Psoas muscle (tissue), 8 donors: ENCODE measurements at regions of chr1 and their contacts with region 1.

Region 1: DNA sequence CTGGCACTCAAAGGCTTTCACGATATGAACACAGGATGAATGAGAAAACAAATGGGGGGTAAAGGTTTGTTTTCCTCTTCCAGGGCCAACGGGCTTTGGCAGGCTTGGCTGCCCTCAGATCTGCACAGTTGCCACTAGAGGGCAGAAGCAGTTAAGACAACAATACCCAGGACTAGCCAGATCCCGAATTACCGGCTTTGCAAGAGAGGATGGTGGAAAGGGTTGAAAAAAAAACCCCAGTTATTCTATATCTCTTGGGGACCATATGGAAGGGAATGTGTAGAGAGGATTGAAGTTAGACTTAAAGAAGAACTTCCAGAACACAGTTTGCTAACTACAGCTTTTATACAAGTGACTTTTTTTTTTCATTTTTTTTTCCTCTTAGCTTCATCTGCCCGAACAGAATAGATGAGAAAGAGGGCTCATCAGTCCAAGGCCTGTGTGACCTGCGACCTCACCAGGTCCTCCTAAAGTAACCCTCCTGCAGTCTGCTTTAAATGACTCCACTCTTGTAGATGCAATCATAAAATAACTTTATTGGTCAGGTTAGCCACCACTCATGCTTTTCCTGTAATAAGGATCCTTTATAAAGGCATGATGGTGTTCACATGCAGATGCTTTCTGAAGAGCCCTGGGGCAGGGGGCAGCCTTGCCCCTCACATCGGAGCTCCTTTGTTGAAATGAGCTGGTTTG is 10.7 kb downstream of the FMOD start:
- DNase-seq: peak; percentile 57 to 74
- ATAC-seq: peak; percentile 69 to 79 (median 78)
- H3K4me3 ChIP-seq: no peak overlapping the region
- H3K27ac ChIP-seq: no peak overlapping the region
- H3K4me1 ChIP-seq: peaks cover 11% of the 10 kb centered on the region
- H3K27me3 ChIP-seq: no peaks in the 10 kb centered on the region
- CTCF ChIP-seq: peak; percentile 90

Region 2: GRCh38 chr1:203229471-203230135 is 110.7 kb before region 1 on chr1 and contains the start of gene CHIT1:
- intact Hi-C with region 1: no loop called
- DNase-seq: no peak
- ATAC-seq: no peak
- H3K4me3 ChIP-seq: no peak within 1 kb of the TSS
- H3K27ac ChIP-seq: no peak within 1 kb of the TSS
- H3K4me1 ChIP-seq: no peaks in the 10 kb centered on the region
- H3K27me3 ChIP-seq: no peaks in the 10 kb centered on the region
- CTCF ChIP-seq: no peak
- total RNA-seq, gene CHIT1: 0.08 to 0.27 TPM in 2 of 4 donors, not detected in the others

Region 3: DNA sequence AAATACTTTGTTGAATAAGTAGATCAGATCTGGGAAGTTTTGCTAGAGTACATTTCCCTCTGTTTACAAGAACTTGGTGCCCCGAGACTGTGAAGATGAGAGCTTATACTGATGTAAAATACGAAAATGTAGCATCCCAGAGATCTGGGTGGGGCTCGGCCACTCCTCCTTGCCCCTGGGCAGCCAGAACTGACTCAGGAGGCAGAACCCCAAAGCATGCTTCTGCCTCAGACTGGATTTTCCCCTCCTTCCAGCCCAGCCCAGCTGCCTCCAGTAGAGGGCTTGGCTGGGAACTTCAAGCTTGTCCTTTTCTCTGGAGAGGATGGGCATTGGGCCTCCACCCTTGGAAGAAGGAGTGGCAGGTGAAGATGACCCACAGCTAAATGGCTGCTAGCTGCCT is 59.3 kb before region 1 on chr1:
- intact Hi-C with region 1: no loop called
- DNase-seq: no peak
- ATAC-seq: peak in 2 of 4 donors; percentile 3 to 11
- H3K4me3 ChIP-seq: no peak overlapping the region
- H3K27ac ChIP-seq: peak overlapping the region; percentile 91
- H3K4me1 ChIP-seq: peaks cover 92% of the 10 kb centered on the region
- H3K27me3 ChIP-seq: no peaks in the 10 kb centered on the region
- CTCF ChIP-seq: no peak

Region 4: GRCh38 chr1:203440771-203441170 is 100.5 kb after region 1 on chr1:
- intact Hi-C with region 1: loop called in 1 of 2 experiments (anchors 1 kb)
- DNase-seq: peak; percentile 80 to 84
- ATAC-seq: peak; percentile 61 to 85 (median 76)
- H3K4me3 ChIP-seq: no peak overlapping the region
- H3K27ac ChIP-seq: no peak overlapping the region
- H3K4me1 ChIP-seq: no peaks in the 10 kb centered on the region
- H3K27me3 ChIP-seq: peaks cover 0 to 5% (median 0%) of the 10 kb centered on the region in 3 donors
- CTCF ChIP-seq: peak; percentile 46

Region 5: DNA sequence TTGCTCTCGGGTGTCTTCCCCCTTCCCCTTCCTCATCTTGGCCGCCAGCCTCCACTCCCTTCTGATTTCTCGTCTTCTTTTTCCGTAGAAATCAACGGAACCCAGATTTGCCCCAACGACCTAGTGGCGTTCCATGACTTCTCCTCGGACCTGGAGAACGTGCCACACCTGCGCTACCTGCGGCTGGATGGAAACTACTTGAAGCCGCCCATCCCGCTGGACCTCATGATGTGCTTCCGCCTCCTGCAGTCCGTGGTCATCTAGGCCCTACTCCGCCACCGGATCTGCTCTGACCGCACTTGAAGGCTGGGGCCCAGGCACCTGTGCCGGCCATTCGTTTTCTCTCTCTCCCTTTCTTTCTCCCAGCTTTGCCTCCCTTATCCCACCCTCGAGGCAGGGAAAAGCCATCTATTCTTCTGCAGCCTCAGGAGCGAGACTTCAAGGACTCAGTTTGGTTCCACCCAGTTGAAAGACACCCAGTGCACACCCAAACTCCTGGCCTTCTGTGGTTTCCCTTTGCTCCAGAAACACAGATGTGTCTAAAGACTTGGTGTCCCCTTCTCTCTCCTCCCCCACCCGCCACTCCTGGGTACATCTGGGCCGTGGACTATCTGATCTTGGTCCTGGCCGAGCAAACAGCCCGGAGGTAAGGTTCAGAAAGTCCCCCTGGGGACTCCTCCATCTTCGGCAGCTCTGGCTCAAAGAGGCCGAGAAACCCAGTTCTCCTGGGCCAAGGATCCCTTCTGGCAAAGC is 146.5 kb after region 1 on chr1:
- intact Hi-C with region 1: loop called (anchors 1 to 2 kb)
- DNase-seq: no peak
- ATAC-seq: peak in 2 of 4 donors; percentile 12 to 26
- H3K4me3 ChIP-seq: peak overlapping the region; percentile 64
- H3K27ac ChIP-seq: peak overlapping the region; percentile 56
- H3K4me1 ChIP-seq: peaks cover 11% of the 10 kb centered on the region
- H3K27me3 ChIP-seq: no peaks in the 10 kb centered on the region
- CTCF ChIP-seq: no peak

Region 6: DNA sequence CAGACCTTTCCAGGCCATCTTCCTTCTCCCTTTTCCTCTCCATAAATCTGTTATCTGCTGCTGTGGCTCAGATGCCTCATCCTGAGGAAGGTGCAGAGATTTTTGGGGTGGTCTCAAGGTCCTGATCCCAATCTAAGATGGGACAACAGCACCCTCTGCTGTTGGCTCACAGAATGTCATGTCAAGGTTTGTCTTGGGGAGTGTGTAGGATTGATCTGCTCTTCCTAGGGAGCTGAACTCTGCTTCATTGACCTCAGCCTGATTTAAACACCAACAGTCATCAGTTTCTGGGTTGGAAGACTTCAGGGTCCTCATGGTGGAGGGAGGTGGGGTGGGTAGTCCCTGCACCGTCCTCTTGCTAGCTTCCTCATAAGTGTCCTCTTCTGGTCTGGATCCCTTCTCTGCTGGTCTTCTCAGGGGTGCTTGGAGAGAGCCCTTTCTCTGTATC is 361.9 kb after region 1 on chr1:
- intact Hi-C with region 1: loop called in 1 of 2 experiments (anchors 5 kb)
- DNase-seq: peak; percentile 29 to 62
- ATAC-seq: peak; percentile 67 to 91 (median 78)
- H3K4me3 ChIP-seq: no peak overlapping the region
- H3K27ac ChIP-seq: no peak overlapping the region
- H3K4me1 ChIP-seq: no peaks in the 10 kb centered on the region
- H3K27me3 ChIP-seq: no peaks in the 10 kb centered on the region
- CTCF ChIP-seq: peak; percentile 86